ENCODE measurements at regions of chr12 and their contacts with region 1.

Region 1: GRCh38 chr12:32062881-32063280 is 43.8 kb upstream of the BICD1 start:
- DNase-seq: peak; percentile 25
- H3K4me3 ChIP-seq: no peak overlapping the region
- H3K27ac ChIP-seq: no peak overlapping the region
- H3K4me1 ChIP-seq: no peaks in the 10 kb centered on the region; a peak in 1 of 4 replicates
- H3K27me3 ChIP-seq: no peaks in the 10 kb centered on the region
- CTCF ChIP-seq: no peak
- EP300 ChIP-seq: no peak
- RAD21 ChIP-seq: no peak

Region 2: DNA sequence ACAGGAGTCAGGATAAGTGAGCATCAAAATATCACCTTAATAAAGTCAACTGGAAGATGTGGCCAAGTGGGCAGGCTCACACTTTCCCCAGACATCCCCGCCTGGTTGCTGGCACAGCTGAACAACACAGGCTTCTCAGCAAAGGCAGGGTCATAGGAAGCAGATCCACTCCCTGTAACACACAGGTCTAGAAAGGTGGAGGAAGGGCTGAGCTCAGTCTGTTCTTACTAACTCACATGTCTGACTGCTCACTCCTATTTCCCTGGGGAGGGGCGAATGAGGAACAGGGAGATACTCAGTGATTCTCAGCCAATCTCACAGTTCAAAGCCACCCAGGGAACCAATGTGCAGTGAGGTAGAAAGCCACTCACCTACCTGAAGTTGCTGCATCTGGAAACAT is 289.0 kb before region 1 on chr12:
- CTCF ChIA-PET with region 1: no interaction called
- POLR2A ChIA-PET with region 1: no interaction called
- DNase-seq: peak; percentile 26
- H3K4me3 ChIP-seq: no peak overlapping the region
- H3K27ac ChIP-seq: no peak overlapping the region
- H3K4me1 ChIP-seq: peaks cover 0 to 9% of the 10 kb centered on the region in 2 experiments; a peak in 1 of 4 replicates
- H3K27me3 ChIP-seq: no peaks in the 10 kb centered on the region
- CTCF ChIP-seq: no peak
- EP300 ChIP-seq: no peak
- RAD21 ChIP-seq: no peak

Region 3: GRCh38 chr12:32089586-32089985 is 26.7 kb after region 1 on chr12:
- CTCF ChIA-PET with region 1: interaction called, 21 read pairs
- POLR2A ChIA-PET with region 1: no interaction called
- DNase-seq: peak; percentile 83
- H3K4me3 ChIP-seq: no peak overlapping the region
- H3K27ac ChIP-seq: peak overlapping the region; percentile 27 to 96; a peak in 3 of 4 replicates
- H3K4me1 ChIP-seq: peaks cover 0 to 14% of the 10 kb centered on the region in 2 experiments; a peak in 2 of 4 replicates
- H3K27me3 ChIP-seq: no peaks in the 10 kb centered on the region
- CTCF ChIP-seq: no peak
- EP300 ChIP-seq: peak; percentile 8 to 96; a peak in 3 of 4 replicates
- RAD21 ChIP-seq: peak; percentile 41

Region 4: GRCh38 chr12:32106517-32107358 is 43.9 kb after region 1 on chr12 and contains the start of gene BICD1:
- CTCF ChIA-PET with region 1: interaction called, 16 read pairs
- POLR2A ChIA-PET with region 1: interaction called, 3 read pairs
- DNase-seq: peak; percentile 96
- H3K4me3 ChIP-seq: peak within 1 kb of the TSS; percentile 86 to 99
- H3K27ac ChIP-seq: peak within 1 kb of the TSS; percentile 70 to 91
- H3K4me1 ChIP-seq: peaks cover 4 to 17% of the 10 kb centered on the region in 2 experiments; a peak in 3 of 4 replicates
- H3K27me3 ChIP-seq: no peaks in the 10 kb centered on the region
- CTCF ChIP-seq: peak; percentile 48
- EP300 ChIP-seq: peak in 1 of 2 experiments; percentile 42; a peak in 1 of 4 replicates
- RAD21 ChIP-seq: peak; percentile 37
- polyA plus RNA-seq, gene BICD1: 12.1 and 13.2 TPM in 2 replicates

Region 5: GRCh38 chr12:32151552-32151951 is 88.7 kb after region 1 on chr12:
- CTCF ChIA-PET with region 1: interaction called, 10 read pairs
- POLR2A ChIA-PET with region 1: no interaction called
- DNase-seq: no peak
- H3K4me3 ChIP-seq: no peak overlapping the region
- H3K27ac ChIP-seq: no peak overlapping the region
- H3K4me1 ChIP-seq: peaks cover 0 to 29% of the 10 kb centered on the region in 2 experiments; a peak in 2 of 4 replicates
- H3K27me3 ChIP-seq: no peaks in the 10 kb centered on the region
- CTCF ChIP-seq: no peak
- EP300 ChIP-seq: no peak
- RAD21 ChIP-seq: no peak

Region 6: GRCh38 chr12:32305163-32305562 is 242.3 kb after region 1 on chr12:
- CTCF ChIA-PET with region 1: interaction called, 47 read pairs
- POLR2A ChIA-PET with region 1: no interaction called
- DNase-seq: peak; percentile 36
- H3K4me3 ChIP-seq: no peak overlapping the region
- H3K27ac ChIP-seq: no peak overlapping the region
- H3K4me1 ChIP-seq: peaks cover 4% of the 10 kb centered on the region in 2 experiments; a peak in 3 of 4 replicates
- H3K27me3 ChIP-seq: no peaks in the 10 kb centered on the region
- CTCF ChIP-seq: peak; percentile 72
- EP300 ChIP-seq: no peak
- RAD21 ChIP-seq: peak; percentile 78

Region 7: GRCh38 chr12:32312049-32312670 is 249.3 kb after region 1 on chr12:
- CTCF ChIA-PET with region 1: interaction called, 47 read pairs
- POLR2A ChIA-PET with region 1: interaction called, 3 read pairs
- DNase-seq: peak; percentile 44
- H3K4me3 ChIP-seq: no peak overlapping the region
- H3K27ac ChIP-seq: peak overlapping the region in 1 of 2 experiments; percentile 28; a peak in 2 of 4 replicates
- H3K4me1 ChIP-seq: peaks cover 4 to 9% of the 10 kb centered on the region in 2 experiments; a peak in 3 of 4 replicates
- H3K27me3 ChIP-seq: no peaks in the 10 kb centered on the region
- CTCF ChIP-seq: peak; percentile 72
- EP300 ChIP-seq: no peak
- RAD21 ChIP-seq: peak; percentile 69